MCF 10A (cell line): ENCODE measurements at regions of chrX and their contacts with region 1.

Region 1: DNA sequence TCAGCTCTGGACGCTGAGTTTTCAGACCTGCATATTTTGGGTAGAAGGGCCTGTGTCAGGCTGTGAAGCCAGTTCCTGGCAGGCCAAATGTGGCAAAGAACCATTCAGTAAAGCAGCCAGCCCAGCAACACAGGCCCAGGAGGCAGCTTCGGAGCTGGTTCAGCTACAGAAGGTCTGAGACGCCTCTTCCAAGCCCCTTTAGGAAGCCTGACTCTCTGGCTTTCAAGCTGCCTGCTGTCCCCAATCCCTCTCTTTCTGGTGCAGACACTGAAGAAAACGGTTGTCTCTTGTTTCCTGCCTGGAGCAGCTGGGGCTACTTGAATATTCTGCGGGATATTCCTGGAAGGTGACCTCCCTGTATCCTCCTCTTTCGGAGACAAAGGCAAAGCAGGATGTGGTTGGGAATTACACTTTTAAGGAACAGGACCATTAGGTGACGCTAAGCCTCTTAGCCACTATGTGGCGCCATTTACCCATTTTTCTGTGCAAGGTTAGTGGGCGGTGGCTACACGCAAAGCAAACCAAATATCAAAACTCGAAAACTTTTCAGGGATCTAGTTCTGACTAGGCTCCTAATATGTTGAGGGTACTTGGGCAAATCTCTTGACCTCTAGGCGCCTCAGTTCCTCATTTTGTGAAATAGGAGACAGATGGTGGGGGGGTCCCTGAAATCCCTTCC is 47.2 kb upstream of the LAS1L start:
- DNase-seq: peak; percentile 72
- H3K4me3 Mint-ChIP-seq: no peak overlapping the region
- H3K27ac Mint-ChIP-seq: no peak overlapping the region
- H3K4me1 Mint-ChIP-seq: peaks cover 5% of the 10 kb centered on the region
- H3K27me3 Mint-ChIP-seq: no peaks in the 10 kb centered on the region
- CTCF ChIP-seq: peak; percentile 60

Region 2: DNA sequence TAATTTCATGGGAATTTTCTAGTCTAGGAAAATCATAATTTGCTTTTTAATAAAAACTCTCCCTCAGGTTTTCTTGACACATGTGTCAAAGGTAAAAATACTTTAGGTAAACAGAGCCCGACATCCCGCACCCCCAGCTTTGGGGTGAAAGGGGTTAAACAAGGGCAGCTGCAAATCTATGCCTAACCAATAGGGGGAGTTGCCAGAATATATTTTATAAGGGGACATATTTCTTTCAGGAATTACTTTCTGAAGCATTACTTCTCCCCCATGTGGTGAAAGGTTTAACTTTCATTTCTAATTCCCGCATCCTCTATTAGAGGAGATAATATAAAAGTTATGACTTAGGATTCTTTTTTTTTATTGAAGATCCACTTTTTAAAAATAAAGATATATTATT is 528.3 kb after region 1 on chrX:
- CTCF ChIA-PET with region 1: interaction called, 6 read pairs
- POLR2A ChIA-PET with region 1: no interaction called
- intact Hi-C with region 1: loop called (anchors 2 kb)
- DNase-seq: peak; percentile 27
- H3K4me3 Mint-ChIP-seq: no peak overlapping the region
- H3K27ac Mint-ChIP-seq: no peak overlapping the region
- H3K4me1 Mint-ChIP-seq: no peaks in the 10 kb centered on the region
- H3K27me3 Mint-ChIP-seq: no peaks in the 10 kb centered on the region
- CTCF ChIP-seq: peak; percentile 40